ENCODE measurements at regions of chr19 and their contacts with region 1.

Region 1: DNA sequence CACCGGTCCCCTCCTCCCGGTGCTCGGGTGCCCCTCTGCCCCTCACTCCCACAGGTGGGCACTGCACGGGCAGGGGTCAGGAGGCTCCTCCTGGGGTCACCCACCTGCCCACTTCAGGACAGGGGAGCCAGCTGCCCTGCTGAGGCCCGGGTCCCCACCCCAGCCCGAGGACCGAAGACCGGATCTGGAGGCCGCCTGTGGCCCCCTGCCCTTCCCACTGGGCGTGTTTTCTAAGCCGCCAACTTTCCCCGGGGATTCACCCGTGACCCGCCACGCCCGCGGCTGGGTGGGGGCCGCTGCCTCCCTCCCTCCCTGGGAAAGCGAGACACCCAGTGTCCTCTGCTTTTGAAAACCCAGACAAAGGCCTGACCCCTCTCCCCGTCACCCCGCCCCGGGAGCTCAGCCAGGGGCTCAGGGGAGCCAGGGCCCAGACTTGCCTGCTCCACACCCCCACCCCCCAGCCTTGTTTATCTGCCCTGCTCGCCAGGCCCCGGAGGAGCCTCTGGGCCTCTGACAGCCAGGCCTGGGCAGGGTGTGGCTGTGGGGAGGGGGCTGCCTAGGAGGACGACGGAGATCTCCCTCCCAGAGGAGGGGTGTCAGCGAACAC is 1.3 kb downstream of the PALM start:
- DNase-seq: peak; percentile 67 to 77
- ATAC-seq: peak; percentile 45 to 72 (median 65)
- H3K4me3 ChIP-seq: peak overlapping the region; percentile 44 to 83 (median 70)
- H3K27ac ChIP-seq: peak overlapping the region; percentile 80 to 95 (median 89)
- H3K4me1 ChIP-seq: peaks cover 0 to 29% (median 19%) of the 10 kb centered on the region in 9 donors
- H3K27me3 ChIP-seq: peaks cover 0 to 26% (median 0%) of the 10 kb centered on the region in 7 donors
- CTCF ChIP-seq: no peak

Region 2: GRCh38 chr19:726993-727956 is 17.2 kb after region 1 on chr19:
- intact Hi-C with region 1: loop called in 1 of 10 experiments (anchors 2 kb)
- DNase-seq: no peak
- ATAC-seq: peak; percentile 10 to 29 (median 15)
- H3K4me3 ChIP-seq: peak overlapping the region in 2 of 10 donors; percentile 7 to 14
- H3K27ac ChIP-seq: peak overlapping the region; percentile 63 to 94 (median 88)
- H3K4me1 ChIP-seq: peaks cover 0 to 37% (median 22%) of the 10 kb centered on the region in 9 donors
- H3K27me3 ChIP-seq: peaks cover 0 to 4% (median 0%) of the 10 kb centered on the region in 7 donors
- CTCF ChIP-seq: no peak